Endothelial cell of umbilical vein (primary cell): ENCODE measurements at regions of chr19 and their contacts with region 1.

Region 1: GRCh38 chr19:50329146-50329925 is at the start of gene KCNC3:
- DNase-seq: peak; percentile 99
- H3K4me3 ChIP-seq: peak within 1 kb of the TSS; percentile 28 to 42 (median 31)
- H3K27ac ChIP-seq: no peak within 1 kb of the TSS
- H3K4me1 ChIP-seq: peaks cover 9% of the 10 kb centered on the region
- H3K27me3 ChIP-seq: peaks cover 32 to 35% of the 10 kb centered on the region in 2 experiments
- CTCF ChIP-seq: no peak
- POLR2A ChIP-seq: no peak
- total RNA-seq, gene KCNC3: 0.76 and 0.91 TPM in 2 replicates

Region 2: GRCh38 chr19:50252111-50252886 is 77.0 kb before region 1 on chr19:
- CTCF ChIA-PET with region 1: interaction called, 173 read pairs
- POLR2A ChIA-PET with region 1: no interaction called
- dilution Hi-C with region 1: no loop called
- intact Hi-C with region 1: loop called (anchors 1 kb)
- DNase-seq: peak; percentile 25
- H3K4me3 ChIP-seq: no peak overlapping the region
- H3K27ac ChIP-seq: no peak overlapping the region
- H3K4me1 ChIP-seq: no peaks in the 10 kb centered on the region
- H3K27me3 ChIP-seq: no peaks in the 10 kb centered on the region
- CTCF ChIP-seq: peak; percentile 60 to 82
- POLR2A ChIP-seq: no peak

Region 3: DNA sequence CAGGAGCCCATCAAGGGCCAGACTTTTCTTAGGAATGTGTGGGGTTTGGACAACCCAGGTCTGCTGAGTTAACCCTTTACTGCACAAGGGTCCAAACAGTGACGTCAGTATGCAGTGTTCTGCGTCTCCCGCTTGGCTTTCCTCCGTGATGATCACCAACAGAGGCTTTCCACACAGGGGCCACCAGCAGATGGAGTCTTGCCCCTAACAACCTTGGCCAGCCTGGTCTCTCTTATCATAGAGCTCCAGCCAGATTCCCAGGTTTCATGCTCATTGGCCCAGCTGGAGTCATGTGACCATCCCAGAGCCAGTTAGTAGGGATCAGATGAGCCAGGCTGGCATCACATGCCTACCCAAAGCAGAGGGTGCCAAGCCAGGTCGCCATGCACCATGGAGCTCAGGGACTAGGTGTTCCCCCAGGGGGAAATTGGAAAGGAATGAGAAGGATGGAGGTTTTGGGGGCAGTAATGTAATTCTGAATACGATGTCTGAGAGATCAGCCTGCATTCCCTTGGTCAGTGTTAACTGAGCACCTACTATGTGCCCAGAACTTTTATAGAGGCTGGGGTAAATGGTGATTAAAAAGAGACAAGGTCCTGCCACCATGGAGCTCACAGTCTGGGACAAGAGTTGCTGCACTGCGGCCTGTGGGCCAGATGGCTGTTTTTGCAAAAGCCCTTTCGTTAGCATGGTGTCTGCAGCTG is 64.7 kb before region 1 on chr19:
- CTCF ChIA-PET with region 1: interaction called, 39 read pairs
- POLR2A ChIA-PET with region 1: no interaction called
- dilution Hi-C with region 1: no loop called
- intact Hi-C with region 1: no loop called
- DNase-seq: peak; percentile 5
- H3K4me3 ChIP-seq: no peak overlapping the region
- H3K27ac ChIP-seq: no peak overlapping the region
- H3K4me1 ChIP-seq: no peaks in the 10 kb centered on the region
- H3K27me3 ChIP-seq: no peaks in the 10 kb centered on the region
- CTCF ChIP-seq: no peak
- POLR2A ChIP-seq: no peak

Region 4: GRCh38 chr19:50349277-50350057 is 20.1 kb after region 1 on chr19:
- CTCF ChIA-PET with region 1: interaction called, 5 read pairs
- POLR2A ChIA-PET with region 1: no interaction called
- dilution Hi-C with region 1: no loop called
- intact Hi-C with region 1: loop called (anchors 1 kb)
- DNase-seq: peak; percentile 79
- H3K4me3 ChIP-seq: no peak overlapping the region
- H3K27ac ChIP-seq: peak overlapping the region; percentile 78
- H3K4me1 ChIP-seq: peaks cover 10% of the 10 kb centered on the region
- H3K27me3 ChIP-seq: peaks cover 0 to 2% of the 10 kb centered on the region in 2 experiments
- CTCF ChIP-seq: no peak
- POLR2A ChIP-seq: no peak